ENCODE measurements at regions of chr4 and their contacts with region 1.

Region 1: GRCh38 chr4:15882675-15883086 is 55.9 kb downstream of the FGFBP1 start:
- DNase-seq: peak; percentile 57
- H3K4me3 Mint-ChIP-seq: no peak overlapping the region
- H3K27ac Mint-ChIP-seq: no peak overlapping the region
- H3K4me1 Mint-ChIP-seq: no peaks in the 10 kb centered on the region
- H3K27me3 Mint-ChIP-seq: no peaks in the 10 kb centered on the region

Region 2: DNA sequence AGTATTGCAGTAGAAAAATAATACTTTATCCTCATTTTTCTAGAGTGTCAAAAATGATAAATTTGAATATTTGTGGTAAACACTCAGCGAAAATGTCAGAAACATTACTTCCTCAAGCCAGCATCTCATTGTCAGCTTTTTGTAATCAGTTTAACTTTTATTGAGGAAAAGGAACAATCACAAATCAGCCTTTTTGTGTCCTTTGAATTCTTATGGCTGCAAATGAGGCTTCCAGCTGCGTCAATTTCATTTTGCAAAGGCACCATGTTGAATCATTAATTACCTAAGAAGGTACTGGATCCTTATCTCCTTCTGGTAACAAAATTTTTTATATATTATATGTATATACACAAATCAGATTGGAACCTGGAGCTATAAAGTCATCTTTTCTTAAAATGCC is 1323.0 kb before region 1 on chr4:
- CTCF ChIA-PET with region 1: no interaction called
- intact Hi-C with region 1: no loop called
- DNase-seq: no peak
- H3K4me3 Mint-ChIP-seq: no peak overlapping the region
- H3K27ac Mint-ChIP-seq: no peak overlapping the region
- H3K4me1 Mint-ChIP-seq: no peaks in the 10 kb centered on the region
- H3K27me3 Mint-ChIP-seq: peaks cover 10% of the 10 kb centered on the region

Region 3: GRCh38 chr4:15794905-15795304 is 87.8 kb before region 1 on chr4:
- CTCF ChIA-PET with region 1: interaction called, 11 read pairs
- intact Hi-C with region 1: no loop called
- DNase-seq: no peak
- H3K4me3 Mint-ChIP-seq: peak overlapping the region; percentile 39
- H3K27ac Mint-ChIP-seq: peak overlapping the region; percentile 47
- H3K4me1 Mint-ChIP-seq: peaks cover 53% of the 10 kb centered on the region
- H3K27me3 Mint-ChIP-seq: no peaks in the 10 kb centered on the region

Region 4: DNA sequence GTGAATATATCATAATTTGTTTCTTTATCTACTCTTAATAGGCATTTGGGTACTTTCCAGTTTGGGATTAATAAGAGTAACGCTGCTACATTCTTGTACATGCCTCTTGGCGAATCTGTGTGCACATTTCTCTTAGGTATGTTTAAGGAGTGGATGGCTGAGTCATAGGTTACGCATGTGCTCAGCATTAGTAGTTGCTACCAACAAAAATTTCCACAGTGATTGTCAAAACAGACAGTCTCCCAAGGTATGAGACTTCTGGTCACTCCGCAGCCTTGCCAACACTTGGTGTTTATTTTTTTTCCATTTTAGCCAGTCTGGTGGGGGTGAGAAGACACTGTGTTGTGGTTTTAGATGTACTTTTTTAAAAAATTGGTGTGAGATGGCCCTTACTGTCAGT is 11.3 kb after region 1 on chr4:
- CTCF ChIA-PET with region 1: interaction called, 15 read pairs
- intact Hi-C with region 1: no loop called
- DNase-seq: no peak
- H3K4me3 Mint-ChIP-seq: no peak overlapping the region
- H3K27ac Mint-ChIP-seq: no peak overlapping the region
- H3K4me1 Mint-ChIP-seq: no peaks in the 10 kb centered on the region
- H3K27me3 Mint-ChIP-seq: peaks cover 11% of the 10 kb centered on the region

Region 5: DNA sequence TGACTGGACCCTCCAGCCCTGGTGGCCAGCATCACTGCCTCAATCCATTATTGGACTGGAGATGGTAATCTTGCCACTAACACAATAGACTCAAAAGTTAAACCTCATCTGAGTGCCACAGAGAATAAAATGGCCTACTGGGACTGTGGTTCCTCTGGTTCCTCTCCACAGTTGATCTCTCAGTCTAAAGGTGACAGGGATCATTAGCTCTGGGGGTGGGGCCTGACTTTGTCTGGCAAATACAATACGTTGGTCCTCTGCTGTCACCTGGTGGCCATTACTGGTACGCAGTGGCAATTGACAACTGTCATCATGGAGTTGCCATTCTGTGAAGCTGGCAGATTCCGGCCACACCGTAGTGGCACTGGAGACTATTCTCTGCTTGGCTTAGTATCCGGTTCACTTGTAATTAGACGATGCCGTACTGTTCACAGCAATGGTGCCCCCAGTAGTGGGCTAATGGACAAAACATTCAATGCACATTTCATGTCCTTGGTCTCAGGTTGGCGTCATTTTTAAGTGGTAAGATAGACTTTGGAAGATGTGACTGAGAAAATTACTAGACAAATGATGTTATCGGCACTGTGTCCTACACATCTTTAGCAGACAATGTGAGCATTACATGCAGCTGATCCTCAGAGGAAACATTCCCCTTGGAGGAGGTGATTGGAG is 73.6 kb after region 1 on chr4:
- CTCF ChIA-PET with region 1: interaction called, 86 read pairs
- intact Hi-C with region 1: loop called (anchors 1 kb)
- DNase-seq: peak; percentile 93
- H3K4me3 Mint-ChIP-seq: no peak overlapping the region
- H3K27ac Mint-ChIP-seq: no peak overlapping the region
- H3K4me1 Mint-ChIP-seq: no peaks in the 10 kb centered on the region
- H3K27me3 Mint-ChIP-seq: no peaks in the 10 kb centered on the region

Region 6: DNA sequence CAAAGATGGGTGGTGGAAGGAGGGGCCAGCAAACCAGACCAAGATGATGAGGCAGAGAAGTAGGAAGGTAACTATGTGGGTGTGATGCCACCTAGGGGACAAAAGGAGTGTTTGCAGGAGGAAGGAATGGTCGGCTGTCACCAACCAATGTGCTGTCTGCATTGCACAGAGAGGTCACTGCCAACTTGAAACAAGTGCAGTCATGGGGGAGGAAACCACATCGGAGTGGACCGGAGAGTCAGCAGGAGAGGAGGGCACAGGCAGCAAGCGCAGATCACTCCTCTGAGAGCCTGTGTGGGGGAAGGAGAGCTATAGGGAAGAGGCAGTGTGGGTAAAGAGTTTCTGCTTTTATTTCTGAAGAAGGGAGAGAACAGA is 118.8 kb after region 1 on chr4:
- CTCF ChIA-PET with region 1: interaction called, 44 read pairs
- intact Hi-C with region 1: loop called (anchors 1 kb)
- DNase-seq: peak; percentile 67
- H3K4me3 Mint-ChIP-seq: no peak overlapping the region
- H3K27ac Mint-ChIP-seq: no peak overlapping the region
- H3K4me1 Mint-ChIP-seq: no peaks in the 10 kb centered on the region
- H3K27me3 Mint-ChIP-seq: no peaks in the 10 kb centered on the region

Region 7: DNA sequence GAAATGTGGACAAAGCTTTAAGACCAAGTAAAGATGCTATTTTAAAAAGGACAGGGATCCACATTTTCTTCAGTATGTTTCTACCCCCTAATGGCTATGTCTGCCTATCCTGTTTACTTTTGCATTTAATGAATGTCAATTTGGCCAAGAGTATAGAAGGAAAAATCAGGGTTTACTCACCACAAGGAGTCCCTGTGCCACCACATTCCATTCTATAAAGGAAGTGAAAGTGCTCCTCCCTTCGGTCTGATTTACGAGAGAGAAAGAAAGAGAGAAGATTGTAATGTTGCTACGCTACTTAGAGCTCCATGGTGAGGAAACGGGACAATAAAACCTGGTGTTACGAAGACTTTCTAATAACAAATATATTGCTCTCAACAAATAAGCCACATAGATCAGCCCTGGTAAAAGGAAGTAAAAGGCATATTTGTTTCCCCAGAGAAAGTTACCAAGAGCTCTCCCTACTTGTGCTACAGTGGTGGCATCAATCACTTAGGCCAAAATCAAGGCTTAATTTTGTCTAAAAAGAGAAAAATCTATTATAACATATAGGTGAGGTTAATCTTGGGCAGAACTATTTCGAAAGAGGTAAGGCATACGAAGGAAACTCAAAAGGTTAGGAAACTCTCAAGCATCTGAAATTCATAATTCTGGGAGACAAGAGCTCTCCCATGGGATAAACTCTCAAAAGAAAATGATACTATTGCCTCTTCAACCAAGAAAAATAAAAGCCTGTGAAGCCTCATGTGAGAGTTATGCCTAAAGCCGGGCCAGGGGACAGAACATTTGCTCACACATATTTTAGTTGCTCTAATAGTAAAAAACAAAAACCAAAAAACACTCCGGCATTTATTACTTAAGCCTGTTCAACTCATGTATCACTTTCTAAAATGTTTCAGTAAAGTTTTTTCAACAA is 314.1 kb after region 1 on chr4:
- CTCF ChIA-PET with region 1: no interaction called
- intact Hi-C with region 1: no loop called
- DNase-seq: no peak
- H3K4me3 Mint-ChIP-seq: no peak overlapping the region
- H3K27ac Mint-ChIP-seq: no peak overlapping the region
- H3K4me1 Mint-ChIP-seq: peaks cover 29% of the 10 kb centered on the region
- H3K27me3 Mint-ChIP-seq: no peaks in the 10 kb centered on the region

Region 8: DNA sequence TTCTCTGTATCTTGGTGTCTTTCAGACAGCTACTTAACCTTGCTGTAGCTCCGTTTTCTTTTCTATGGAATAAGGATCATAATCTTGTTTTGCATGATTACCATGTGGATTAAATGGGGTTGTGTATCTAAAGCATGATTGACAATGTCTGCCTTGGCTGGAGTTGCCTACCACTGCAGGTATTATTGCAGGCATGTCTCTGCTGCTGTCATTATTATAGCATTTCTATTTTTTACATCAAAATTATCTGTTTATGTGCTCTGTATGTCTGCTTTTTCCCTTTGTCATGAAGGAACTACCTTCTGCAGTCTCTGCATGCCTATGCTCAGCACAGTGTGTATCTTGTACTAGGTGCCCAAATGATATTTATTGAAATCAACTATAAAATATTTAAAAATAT is 439.5 kb after region 1 on chr4:
- CTCF ChIA-PET with region 1: no interaction called
- intact Hi-C with region 1: no loop called
- DNase-seq: no peak
- H3K4me3 Mint-ChIP-seq: no peak overlapping the region
- H3K27ac Mint-ChIP-seq: no peak overlapping the region
- H3K4me1 Mint-ChIP-seq: no peaks in the 10 kb centered on the region
- H3K27me3 Mint-ChIP-seq: no peaks in the 10 kb centered on the region

Measured in activated naive CD4-positive, alpha-beta T cell treated with anti-CD3 and anti-CD28 coated beads for 36 hours (primary cell).